Dendritic cell treated with granulocyte-macrophage colony-stimulating factor and Interleukin-4, amounts not matched to agents 40 ng/mL and 50 ng/mL, for 4 days (primary cell): ENCODE measurements at regions of chr15 and their contacts with region 1.

Region 1: DNA sequence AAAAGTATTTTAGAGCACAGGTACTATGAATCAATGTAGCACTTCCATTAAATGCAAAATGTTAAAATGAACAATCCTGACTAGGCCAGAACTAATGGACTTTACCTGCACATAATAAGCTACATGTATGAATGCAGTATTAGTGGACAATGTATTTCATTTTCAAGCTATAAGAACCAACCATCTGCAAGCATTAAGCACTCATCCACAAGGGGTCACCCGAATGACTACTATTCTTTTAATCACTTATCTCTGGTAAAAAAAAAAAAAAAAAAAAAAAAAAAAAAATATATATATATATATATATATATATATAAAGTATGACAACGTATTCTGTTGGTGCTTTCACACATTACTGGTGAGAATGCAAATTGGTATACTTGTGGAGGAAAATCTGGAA is 7.2 kb downstream of the HERC1 start:
- H3K4me3 Mint-ChIP-seq: no peak overlapping the region
- H3K27ac Mint-ChIP-seq: no peak overlapping the region
- H3K4me1 Mint-ChIP-seq: peaks cover 45% of the 10 kb centered on the region
- H3K27me3 Mint-ChIP-seq: no peaks in the 10 kb centered on the region

Region 2: DNA sequence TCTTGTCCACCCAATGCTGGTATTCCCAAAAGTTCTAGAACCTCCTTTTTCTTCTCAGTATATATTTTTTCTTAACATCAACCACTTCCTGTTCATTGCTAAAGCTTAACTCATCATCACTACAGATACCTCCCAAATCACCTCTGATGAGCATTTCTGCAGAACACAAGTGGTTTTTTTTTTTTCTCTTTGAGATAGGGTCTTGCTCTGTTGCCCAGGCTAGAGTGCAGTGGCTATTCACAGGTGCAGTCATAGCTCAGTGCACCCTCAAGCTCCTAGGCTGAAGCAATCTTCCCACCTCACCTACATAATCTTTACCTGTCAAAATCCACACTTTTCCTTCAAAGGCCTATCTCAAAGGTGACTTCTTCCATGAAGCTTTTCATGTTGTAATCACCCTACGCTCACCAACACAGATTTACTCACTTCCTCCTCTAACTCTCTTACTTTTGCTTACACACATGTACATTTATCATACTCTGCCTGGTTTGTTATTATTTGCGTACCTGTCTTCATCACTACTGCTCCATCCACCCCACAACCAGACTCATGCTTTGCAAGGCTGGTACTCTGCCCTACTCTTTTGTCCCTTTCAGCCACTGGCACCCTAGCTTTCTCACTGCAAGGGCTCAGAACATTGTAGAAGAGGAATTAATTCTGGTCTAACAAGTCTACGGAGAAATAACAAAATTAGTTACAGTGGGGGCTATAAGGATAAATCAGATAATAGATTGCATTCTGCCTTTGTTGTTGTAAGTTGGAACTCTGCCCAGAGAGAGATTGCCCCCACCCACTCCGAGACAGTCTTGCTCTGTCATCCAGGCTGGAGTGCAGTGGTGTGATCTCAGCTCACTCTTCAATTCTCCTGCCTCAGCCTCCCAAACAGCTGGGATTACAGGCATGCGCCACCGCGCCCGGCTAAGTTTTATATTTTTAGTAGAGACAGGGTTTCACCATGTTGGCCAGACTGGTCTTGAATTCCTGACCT is 20.2 kb before region 1 on chr15:
- intact Hi-C with region 1: no loop called
- H3K4me3 Mint-ChIP-seq: no peak overlapping the region
- H3K27ac Mint-ChIP-seq: peak overlapping the region; percentile 14
- H3K4me1 Mint-ChIP-seq: peaks cover 52% of the 10 kb centered on the region
- H3K27me3 Mint-ChIP-seq: no peaks in the 10 kb centered on the region

Region 3: GRCh38 chr15:64067564-64068030 is 241.1 kb after region 1 on chr15:
- intact Hi-C with region 1: loop called (anchors 5 kb)
- H3K4me3 Mint-ChIP-seq: no peak overlapping the region
- H3K27ac Mint-ChIP-seq: no peak overlapping the region
- H3K4me1 Mint-ChIP-seq: peaks cover 39% of the 10 kb centered on the region
- H3K27me3 Mint-ChIP-seq: no peaks in the 10 kb centered on the region